ENCODE measurements at regions of chr1 and their contacts with region 1.

Region 1: DNA sequence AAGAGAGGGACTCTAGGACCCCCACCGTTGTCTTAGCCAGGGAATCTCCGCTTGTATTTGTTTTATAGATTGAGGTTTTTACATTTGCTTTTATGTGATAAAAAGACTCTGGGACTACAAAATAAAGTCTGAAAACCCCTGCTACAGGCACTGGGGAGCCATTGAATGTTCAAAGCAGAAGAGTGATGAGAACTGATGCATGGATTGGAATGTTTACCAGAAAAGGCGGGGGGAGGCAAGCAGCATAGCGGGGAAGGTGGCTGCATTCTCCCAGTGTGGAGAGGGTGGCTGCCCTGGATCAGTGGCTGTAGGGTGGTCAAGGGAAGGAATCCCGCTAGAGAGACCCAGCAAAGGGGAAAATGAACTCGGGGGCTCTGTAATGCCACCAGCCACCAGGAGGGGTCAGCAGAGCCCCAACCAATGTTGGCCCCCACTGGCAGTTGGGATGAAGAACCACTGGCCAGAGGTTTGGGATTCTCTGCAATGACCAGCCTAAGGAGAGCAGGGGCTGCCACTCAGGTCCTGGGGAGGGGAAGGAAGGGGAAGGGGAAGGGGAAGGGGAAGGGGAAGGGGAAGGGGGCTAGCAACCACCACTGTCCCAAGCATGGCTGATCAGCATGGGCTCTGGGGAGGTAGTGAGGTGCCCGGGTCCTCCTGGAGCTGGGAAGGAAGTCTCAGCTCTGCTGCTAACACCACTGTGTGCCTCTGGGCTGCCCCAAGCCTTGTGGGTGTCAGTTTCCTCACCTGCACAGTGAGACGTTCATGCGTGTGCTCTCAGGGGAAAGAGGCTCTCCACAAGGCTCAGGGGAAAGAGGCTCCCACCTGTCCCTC is 19.2 kb upstream of the PEF1 start:
- DNase-seq: peak; percentile 64
- ATAC-seq: peak; percentile 84
- H3K4me3 Mint-ChIP-seq: no peak overlapping the region
- H3K27ac Mint-ChIP-seq: no peak overlapping the region
- H3K4me1 Mint-ChIP-seq: no peaks in the 10 kb centered on the region
- H3K27me3 Mint-ChIP-seq: peaks cover 2% of the 10 kb centered on the region
- CTCF ChIP-seq: peak; percentile 81

Region 2: DNA sequence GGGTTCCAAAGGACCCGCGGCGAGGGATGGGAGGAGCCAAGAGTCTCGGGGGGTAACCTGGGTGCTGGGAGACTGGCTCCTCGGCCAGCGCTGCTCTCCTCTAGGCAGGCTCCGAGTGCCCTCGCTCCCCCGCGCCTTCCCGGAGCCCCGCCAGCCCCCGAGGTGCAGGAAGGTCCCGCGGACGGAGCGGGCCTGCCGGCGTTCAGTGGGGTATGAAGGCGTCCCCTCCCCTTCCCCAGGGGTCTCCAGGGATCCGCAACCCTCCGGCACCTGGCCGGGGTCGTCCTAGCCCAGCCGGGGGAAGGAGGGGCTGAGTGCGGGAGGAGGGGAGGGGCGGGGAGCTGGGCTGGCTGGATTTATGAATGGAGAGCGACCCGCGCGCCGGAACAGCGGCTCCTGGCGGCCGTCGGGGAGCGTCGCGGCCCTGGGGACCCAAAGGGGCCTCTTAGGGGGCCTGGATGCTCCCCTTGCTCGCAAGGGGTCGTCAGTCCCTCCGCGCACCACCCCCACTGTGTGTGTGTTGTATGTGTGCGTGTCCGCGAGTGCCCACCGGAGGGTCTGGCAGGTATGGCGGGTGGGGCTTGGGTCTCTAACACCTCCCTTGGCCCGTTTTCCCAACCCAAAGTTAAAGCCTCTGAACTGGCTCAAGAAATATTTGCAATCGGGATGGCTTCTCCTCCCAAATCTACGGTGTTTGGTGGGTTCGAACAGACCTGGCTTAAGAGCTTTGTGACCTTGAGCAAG is 45.7 kb before region 1 on chr1:
- CTCF ChIA-PET with region 1: no interaction called
- POLR2A ChIA-PET with region 1: no interaction called
- intact Hi-C with region 1: no loop called
- DNase-seq: peak; percentile 63
- ATAC-seq: peak; percentile 86
- H3K4me3 Mint-ChIP-seq: no peak overlapping the region
- H3K27ac Mint-ChIP-seq: no peak overlapping the region
- H3K4me1 Mint-ChIP-seq: peaks cover 2% of the 10 kb centered on the region
- H3K27me3 Mint-ChIP-seq: peaks cover 23% of the 10 kb centered on the region
- CTCF ChIP-seq: peak; percentile 95

Region 3: DNA sequence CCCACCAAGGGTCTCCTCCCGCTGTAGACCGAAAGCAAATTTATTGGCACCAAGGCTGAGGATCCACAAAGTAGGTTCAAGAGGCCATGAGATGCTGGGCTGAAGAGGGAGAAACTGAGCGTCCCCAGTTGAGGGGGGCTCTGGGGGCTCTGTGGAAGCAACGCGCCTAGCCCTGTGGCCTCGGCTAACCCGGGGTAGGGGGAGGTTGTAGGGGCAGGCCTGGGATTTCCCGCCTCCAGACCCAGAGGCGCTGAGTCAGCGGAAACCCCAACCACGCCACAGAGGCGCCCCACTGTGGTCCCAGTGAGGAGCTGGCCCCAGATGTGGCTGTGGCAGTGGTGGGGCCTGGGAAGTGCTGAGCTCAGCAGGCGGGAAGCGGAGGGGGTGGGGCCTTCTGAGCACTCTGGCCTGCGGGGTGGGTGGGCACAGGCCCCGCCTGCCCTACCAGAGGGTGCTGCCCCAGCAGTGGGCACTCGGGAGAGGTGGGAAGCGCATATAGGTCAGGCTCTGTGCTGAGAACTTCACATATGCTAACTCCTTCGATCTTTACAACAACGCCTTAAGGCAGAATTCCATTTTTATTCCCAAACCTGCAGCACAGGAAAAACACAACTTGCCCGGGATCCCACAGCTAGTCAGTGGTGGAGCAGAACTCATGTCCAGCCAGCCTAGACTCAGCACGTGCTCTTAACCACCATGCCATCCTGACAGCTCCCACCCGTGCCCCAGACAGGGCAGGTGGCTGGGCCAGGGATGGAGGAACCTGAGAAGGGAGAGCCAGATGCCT is 41.4 kb after region 1 on chr1:
- CTCF ChIA-PET with region 1: interaction called, 13 read pairs
- POLR2A ChIA-PET with region 1: interaction called, 3 read pairs
- intact Hi-C with region 1: loop called (anchors 5 kb)
- DNase-seq: peak; percentile 88
- ATAC-seq: peak; percentile 86
- H3K4me3 Mint-ChIP-seq: no peak overlapping the region
- H3K27ac Mint-ChIP-seq: no peak overlapping the region
- H3K4me1 Mint-ChIP-seq: peaks cover 39% of the 10 kb centered on the region
- H3K27me3 Mint-ChIP-seq: peaks cover 32% of the 10 kb centered on the region
- CTCF ChIP-seq: peak; percentile 37

Region 4: GRCh38 chr1:31745096-31745945 is 81.5 kb after region 1 on chr1:
- CTCF ChIA-PET with region 1: interaction called, 10 read pairs
- POLR2A ChIA-PET with region 1: no interaction called
- intact Hi-C with region 1: no loop called
- DNase-seq: peak; percentile 82
- ATAC-seq: peak; percentile 92
- H3K4me3 Mint-ChIP-seq: no peak overlapping the region
- H3K27ac Mint-ChIP-seq: no peak overlapping the region
- H3K4me1 Mint-ChIP-seq: peaks cover 11% of the 10 kb centered on the region
- H3K27me3 Mint-ChIP-seq: peaks cover 2% of the 10 kb centered on the region
- CTCF ChIP-seq: peak; percentile 75